Activated T-helper 1 cell treated with anti-CD3 and anti-CD28 coated beads, Interleukin-12 subunit alpha, Interleukin-12 subunit beta, Interleukin-2, Interleukin-4 antibody, amounts not matched to agents 30 ng/mL and 10 ng/mL and 1 ng/mL, durations not matched to agents 14 hours and 24 hours and 36 hours (primary cell): ENCODE measurements at regions of chr1 and their contacts with region 1.

Region 1: DNA sequence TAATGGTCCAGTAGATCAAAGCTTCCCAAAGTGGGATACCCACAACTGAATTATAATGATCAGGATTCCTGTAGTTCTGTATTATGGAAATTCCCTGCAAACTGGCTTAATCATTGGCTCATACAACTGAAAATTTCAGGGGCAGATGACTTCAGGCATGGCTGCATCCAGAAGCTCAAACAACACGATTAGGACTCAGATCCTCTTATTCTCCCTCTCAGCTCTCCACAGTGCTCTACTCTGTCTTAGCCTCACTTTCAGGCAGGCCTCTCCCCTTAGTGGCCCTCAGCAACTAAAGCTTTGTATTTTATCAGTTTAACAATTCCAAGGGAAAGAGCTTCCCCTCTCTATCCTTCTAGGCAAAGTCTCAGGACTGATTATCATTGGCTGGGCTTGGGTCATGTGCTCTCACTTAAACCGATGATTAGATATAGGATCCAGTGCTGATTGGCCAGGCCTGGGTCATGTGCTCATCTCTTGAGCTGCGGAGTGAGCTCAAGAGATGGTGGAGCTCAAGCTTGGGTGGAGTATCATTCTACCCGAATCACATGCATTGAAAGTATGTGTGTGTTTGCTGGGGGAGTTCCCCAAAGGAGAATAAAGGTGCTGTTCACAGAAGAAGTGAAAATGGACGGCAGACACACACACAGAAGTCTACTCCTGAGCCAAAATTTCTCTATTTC is 57.9 kb upstream of the RUNX3 start:
- DNase-seq: no peak
- H3K4me3 Mint-ChIP-seq: no peak overlapping the region
- H3K27ac Mint-ChIP-seq: no peak overlapping the region
- H3K4me1 Mint-ChIP-seq: peaks cover 97% of the 10 kb centered on the region
- H3K27me3 Mint-ChIP-seq: no peaks in the 10 kb centered on the region

Region 2: GRCh38 chr1:24857507-24858133 is 130.4 kb before region 1 on chr1:
- intact Hi-C with region 1: no loop called
- DNase-seq: no peak
- H3K4me3 Mint-ChIP-seq: no peak overlapping the region
- H3K27ac Mint-ChIP-seq: no peak overlapping the region
- H3K4me1 Mint-ChIP-seq: no peaks in the 10 kb centered on the region
- H3K27me3 Mint-ChIP-seq: peaks cover 31% of the 10 kb centered on the region

Region 3: DNA sequence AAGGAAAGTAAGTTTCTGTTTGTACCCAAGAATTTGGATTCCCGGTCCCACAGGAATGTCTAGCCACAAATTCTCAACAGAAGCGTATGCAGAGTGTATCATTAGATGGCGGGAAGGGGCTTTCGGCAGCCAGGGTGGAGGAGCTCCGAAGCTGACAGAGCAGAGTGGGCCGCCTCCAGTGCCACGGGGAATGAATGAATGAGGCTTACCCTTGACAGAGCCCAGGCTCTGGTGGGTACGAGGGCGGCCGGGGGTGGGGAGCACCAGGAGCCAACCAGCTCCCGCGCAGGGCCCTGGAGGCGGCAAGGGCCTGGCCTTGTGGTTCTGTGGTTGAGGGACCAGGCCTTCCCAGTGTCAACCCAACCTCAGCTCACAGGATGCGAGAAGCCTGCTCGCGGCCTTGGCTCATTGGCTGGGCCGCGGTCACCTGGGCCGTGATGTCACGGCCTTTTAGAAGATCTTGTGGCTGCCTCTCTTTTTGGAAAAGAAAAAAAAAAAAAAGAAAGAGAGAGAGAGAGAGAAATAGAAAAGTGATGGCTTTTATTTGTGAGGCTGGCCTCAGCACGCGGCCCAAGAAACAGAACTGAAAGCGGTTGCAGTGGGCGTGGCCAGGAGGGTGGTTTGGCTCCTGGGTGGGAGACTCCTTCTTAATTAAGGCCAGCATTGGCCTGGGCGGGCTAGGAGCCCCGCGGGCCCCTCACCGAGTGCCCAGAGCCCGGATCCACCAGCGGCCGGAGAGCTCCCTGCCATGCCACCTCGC is 23.0 kb before region 1 on chr1:
- intact Hi-C with region 1: no loop called
- DNase-seq: peak; percentile 93
- H3K4me3 Mint-ChIP-seq: peak overlapping the region; percentile 93
- H3K27ac Mint-ChIP-seq: peak overlapping the region; percentile 99
- H3K4me1 Mint-ChIP-seq: peaks cover 78% of the 10 kb centered on the region
- H3K27me3 Mint-ChIP-seq: no peaks in the 10 kb centered on the region

Region 4: GRCh38 chr1:25003457-25004190 is 15.6 kb after region 1 on chr1:
- intact Hi-C with region 1: loop called (anchors 2 kb)
- DNase-seq: no peak
- H3K4me3 Mint-ChIP-seq: peak overlapping the region; percentile 50
- H3K27ac Mint-ChIP-seq: peak overlapping the region; percentile 89
- H3K4me1 Mint-ChIP-seq: peaks cover 79% of the 10 kb centered on the region
- H3K27me3 Mint-ChIP-seq: no peaks in the 10 kb centered on the region